Activated CD8-positive, alpha-beta T cell treated with anti-CD3 and anti-CD28 coated beads, Interleukin-2, amount 10 ng/mL, durations not matched to agents 7 days and 5 days (primary cell): ENCODE measurements at regions of chr1 and their contacts with region 1.

Region 1: DNA sequence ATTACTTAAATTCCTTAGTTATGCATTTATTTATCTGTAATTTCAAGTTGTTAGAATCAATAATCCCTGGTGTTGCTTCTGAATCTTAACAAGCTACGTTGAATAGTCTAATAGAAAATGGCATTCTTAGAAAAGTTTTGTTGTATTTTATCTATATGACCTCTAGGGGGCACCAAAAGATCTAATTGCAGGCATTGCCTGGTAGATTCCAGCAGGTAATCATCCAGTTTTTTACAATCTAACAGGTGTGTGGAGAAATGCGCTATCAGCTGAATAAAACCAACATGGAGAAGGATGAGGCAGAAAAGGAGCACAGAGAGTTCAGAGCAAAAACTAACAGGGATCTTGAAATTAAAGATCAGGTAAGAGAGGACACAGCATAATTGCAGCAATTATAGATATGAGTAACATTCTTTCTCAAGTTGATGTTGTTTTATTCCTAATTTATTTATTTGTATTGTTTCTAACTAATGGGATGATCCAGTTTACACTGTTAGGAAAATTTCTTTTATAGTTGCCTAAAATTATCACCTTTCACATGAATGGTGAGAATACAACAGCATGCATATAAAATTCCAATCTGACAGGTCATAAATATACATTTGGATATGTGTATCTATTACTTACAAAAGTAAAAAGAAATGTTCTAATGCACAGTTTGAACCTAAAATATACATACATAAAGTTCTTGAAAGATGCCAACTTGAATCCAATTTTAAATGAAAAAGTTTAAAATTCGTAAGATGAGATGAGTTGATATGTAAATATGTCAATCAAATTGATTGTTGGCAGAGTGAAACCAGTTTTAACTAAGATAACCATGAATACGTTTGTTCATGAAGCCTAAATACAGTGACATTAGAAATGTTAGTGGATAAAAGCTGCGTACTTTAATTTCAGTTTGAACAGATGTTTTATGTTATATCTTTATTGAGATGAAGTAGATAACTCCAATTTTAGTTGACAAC is 88.4 kb downstream of the SDCCAG8 start:
- DNase-seq: no peak
- ATAC-seq: no peak
- H3K4me3 Mint-ChIP-seq: no peak overlapping the region
- H3K27ac Mint-ChIP-seq: no peak overlapping the region
- H3K4me1 Mint-ChIP-seq: peaks cover 3% of the 10 kb centered on the region
- H3K27me3 Mint-ChIP-seq: no peaks in the 10 kb centered on the region

Region 2: GRCh38 chr1:243322326-243322725 is 21.9 kb before region 1 on chr1:
- CTCF ChIA-PET with region 1: no interaction called
- POLR2A ChIA-PET with region 1: no interaction called
- DNase-seq: no peak
- ATAC-seq: no peak
- H3K4me3 Mint-ChIP-seq: no peak overlapping the region
- H3K27ac Mint-ChIP-seq: no peak overlapping the region
- H3K4me1 Mint-ChIP-seq: no peaks in the 10 kb centered on the region
- H3K27me3 Mint-ChIP-seq: no peaks in the 10 kb centered on the region

Region 3: GRCh38 chr1:243409284-243409683 is 65.0 kb after region 1 on chr1:
- CTCF ChIA-PET with region 1: interaction called, 32 read pairs
- POLR2A ChIA-PET with region 1: no interaction called
- DNase-seq: no peak
- ATAC-seq: no peak
- H3K4me3 Mint-ChIP-seq: no peak overlapping the region
- H3K27ac Mint-ChIP-seq: no peak overlapping the region
- H3K4me1 Mint-ChIP-seq: peaks cover 8% of the 10 kb centered on the region
- H3K27me3 Mint-ChIP-seq: no peaks in the 10 kb centered on the region

Region 4: GRCh38 chr1:243748706-243749283 is 404.5 kb after region 1 on chr1:
- CTCF ChIA-PET with region 1: interaction called, 43 read pairs
- POLR2A ChIA-PET with region 1: no interaction called
- DNase-seq: peak; percentile 50
- ATAC-seq: peak; percentile 87
- H3K4me3 Mint-ChIP-seq: no peak overlapping the region
- H3K27ac Mint-ChIP-seq: no peak overlapping the region
- H3K4me1 Mint-ChIP-seq: no peaks in the 10 kb centered on the region
- H3K27me3 Mint-ChIP-seq: no peaks in the 10 kb centered on the region

Region 5: GRCh38 chr1:244272471-244273261 is 928.4 kb after region 1 on chr1:
- CTCF ChIA-PET with region 1: interaction called, 25 read pairs
- POLR2A ChIA-PET with region 1: no interaction called
- DNase-seq: peak; percentile 78
- ATAC-seq: peak; percentile 86
- H3K4me3 Mint-ChIP-seq: no peak overlapping the region
- H3K27ac Mint-ChIP-seq: no peak overlapping the region
- H3K4me1 Mint-ChIP-seq: peaks cover 4% of the 10 kb centered on the region
- H3K27me3 Mint-ChIP-seq: peaks cover 8% of the 10 kb centered on the region